ENCODE measurements at regions of chr1 and their contacts with region 1.

Region 1: DNA sequence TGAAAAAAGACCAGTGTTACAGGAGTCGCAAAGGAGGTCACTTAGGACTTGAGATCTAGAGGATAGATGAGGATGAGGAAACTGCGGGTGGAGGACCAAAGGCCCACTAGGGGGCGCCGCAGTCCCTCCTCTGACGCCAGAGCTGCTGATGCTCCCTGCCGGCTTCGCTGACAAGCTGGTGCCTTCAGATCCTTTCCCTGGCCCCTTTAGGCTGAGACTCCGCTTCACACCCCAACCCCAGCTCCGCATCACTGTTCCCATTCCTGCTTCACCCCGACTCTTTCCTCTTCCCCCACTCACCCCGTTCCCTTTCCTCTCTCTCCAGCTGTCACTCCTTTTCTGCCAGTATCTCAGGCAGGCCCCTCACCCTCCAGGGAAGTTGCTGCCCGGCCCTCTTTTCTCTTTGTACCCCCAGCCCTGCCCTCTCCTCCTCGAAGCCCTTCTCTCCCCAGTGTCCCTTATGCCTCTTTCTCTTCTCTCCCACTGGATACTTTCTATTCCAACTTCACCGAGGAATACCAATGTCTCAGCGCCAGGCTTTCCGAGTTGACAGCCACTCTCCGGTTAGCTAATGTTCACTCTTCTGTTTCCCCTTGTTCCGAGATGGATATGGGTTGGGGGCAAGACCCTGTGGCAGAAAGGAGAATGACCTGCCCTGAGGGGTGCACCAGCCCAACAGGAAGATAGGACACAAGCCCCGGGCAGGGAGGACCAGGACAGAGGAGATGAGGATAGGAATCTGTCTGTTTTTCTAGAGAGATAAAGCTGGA is 4.5 kb downstream of the KCNJ9 start:
- DNase-seq: peak; percentile 44
- ATAC-seq: peak; percentile 79
- H3K4me3 ChIP-seq: no peak overlapping the region
- H3K27ac ChIP-seq: no peak overlapping the region
- H3K4me1 ChIP-seq: no peaks in the 10 kb centered on the region; a peak in 1 of 4 replicates
- H3K27me3 ChIP-seq: peaks cover 9% of the 10 kb centered on the region
- CTCF ChIP-seq: peak; percentile 74 to 92 (median 78)
- POLR2A ChIP-seq: no peak
- RAD21 ChIP-seq: peak; percentile 76

Region 2: DNA sequence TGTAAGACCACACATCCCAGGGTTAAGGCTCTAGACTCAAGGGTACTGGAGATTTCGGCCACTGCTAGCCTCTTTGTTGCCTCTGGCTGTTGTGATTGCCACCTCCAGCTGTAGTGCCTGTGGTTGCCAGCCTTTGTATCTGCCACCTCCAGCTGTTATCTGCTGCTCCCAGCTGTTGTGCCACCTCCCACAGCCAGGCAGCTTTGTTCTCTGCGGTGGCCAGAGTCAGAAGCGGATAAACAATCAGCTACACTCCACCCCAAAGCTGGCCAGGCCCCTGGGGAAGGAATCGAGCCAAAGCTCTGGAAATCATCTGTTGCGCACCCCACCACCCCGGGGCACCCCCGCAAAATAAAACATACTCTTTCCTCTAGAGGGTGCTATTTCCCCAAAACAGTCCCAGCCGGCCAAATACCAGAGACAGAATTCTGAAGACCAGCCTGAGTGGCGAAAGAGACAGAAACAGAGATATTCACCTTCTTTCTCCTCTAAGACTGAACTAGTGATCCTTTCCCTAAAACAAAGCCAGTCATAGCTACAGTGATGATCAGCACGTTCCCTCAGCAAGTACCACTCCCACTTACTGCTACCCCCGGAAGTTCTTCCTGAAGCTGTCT is 39.3 kb before region 1 on chr1:
- CTCF ChIA-PET with region 1: interaction called, 13 read pairs
- POLR2A ChIA-PET with region 1: no interaction called
- RAD21 ChIA-PET with region 1: interaction called in 1 of 2 experiments, 3 read pairs
- intact Hi-C with region 1: no loop called
- DNase-seq: no peak
- ATAC-seq: peak; percentile 90
- H3K4me3 ChIP-seq: no peak overlapping the region
- H3K27ac ChIP-seq: no peak overlapping the region
- H3K4me1 ChIP-seq: peaks cover 4 to 6% of the 10 kb centered on the region in 2 experiments; a peak in 3 of 4 replicates
- H3K27me3 ChIP-seq: peaks cover 13% of the 10 kb centered on the region
- CTCF ChIP-seq: peak; percentile 66 to 88 (median 81)
- POLR2A ChIP-seq: no peak
- RAD21 ChIP-seq: peak; percentile 76

Region 3: GRCh38 chr1:160071289-160071688 is 14.6 kb before region 1 on chr1:
- CTCF ChIA-PET with region 1: interaction called, 10 read pairs
- POLR2A ChIA-PET with region 1: no interaction called
- RAD21 ChIA-PET with region 1: no interaction called
- intact Hi-C with region 1: no loop called
- DNase-seq: no peak
- ATAC-seq: no peak
- H3K4me3 ChIP-seq: no peak overlapping the region
- H3K27ac ChIP-seq: no peak overlapping the region
- H3K4me1 ChIP-seq: peaks cover 0 to 13% of the 10 kb centered on the region in 2 experiments; a peak in 1 of 4 replicates
- H3K27me3 ChIP-seq: no peaks in the 10 kb centered on the region
- CTCF ChIP-seq: no peak
- POLR2A ChIP-seq: no peak
- RAD21 ChIP-seq: no peak

Region 4: DNA sequence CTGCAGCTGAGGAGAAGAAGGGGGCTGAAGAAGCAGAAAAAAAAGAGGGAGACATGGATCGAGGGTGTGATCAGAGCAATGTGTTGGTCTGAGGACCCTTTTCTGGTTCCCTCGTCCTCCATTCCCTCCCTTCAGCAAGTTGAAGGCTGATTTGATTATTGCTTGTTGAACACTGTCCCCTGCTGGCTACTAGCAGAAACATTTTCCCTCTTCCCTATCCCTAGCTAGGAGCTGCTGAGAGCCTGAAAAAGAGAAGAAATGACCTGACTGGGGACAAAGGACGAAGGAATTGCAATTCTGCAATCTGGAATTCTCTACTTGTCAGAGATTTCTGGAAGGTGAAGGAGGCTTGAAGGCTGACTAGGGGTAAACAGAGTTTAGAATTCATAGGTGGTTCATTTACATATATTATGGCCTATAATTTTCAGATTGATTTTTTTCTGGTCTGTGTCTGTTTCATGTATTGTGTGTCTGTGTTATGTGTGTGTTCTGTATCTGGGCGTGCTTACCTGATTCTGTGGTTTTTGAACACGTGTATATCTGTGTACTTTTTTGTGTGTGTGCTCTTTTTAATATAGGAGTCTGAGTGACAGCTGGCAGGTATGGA is 290.8 kb after region 1 on chr1:
- CTCF ChIA-PET with region 1: interaction called, 17 read pairs
- POLR2A ChIA-PET with region 1: no interaction called
- RAD21 ChIA-PET with region 1: interaction called, 3 to 4 read pairs
- intact Hi-C with region 1: no loop called
- DNase-seq: peak; percentile 61
- ATAC-seq: peak; percentile 92
- H3K4me3 ChIP-seq: no peak overlapping the region
- H3K27ac ChIP-seq: no peak overlapping the region
- H3K4me1 ChIP-seq: peaks cover 0 to 8% of the 10 kb centered on the region in 2 experiments; a peak in 1 of 4 replicates
- H3K27me3 ChIP-seq: no peaks in the 10 kb centered on the region
- CTCF ChIP-seq: peak; percentile 89 to 96 (median 92)
- POLR2A ChIP-seq: no peak
- RAD21 ChIP-seq: peak; percentile 96

Measured in HCT116 (cell line).